GM18951 (cell line): ENCODE measurements at regions of chr18 and their contacts with region 1.

Region 1: DNA sequence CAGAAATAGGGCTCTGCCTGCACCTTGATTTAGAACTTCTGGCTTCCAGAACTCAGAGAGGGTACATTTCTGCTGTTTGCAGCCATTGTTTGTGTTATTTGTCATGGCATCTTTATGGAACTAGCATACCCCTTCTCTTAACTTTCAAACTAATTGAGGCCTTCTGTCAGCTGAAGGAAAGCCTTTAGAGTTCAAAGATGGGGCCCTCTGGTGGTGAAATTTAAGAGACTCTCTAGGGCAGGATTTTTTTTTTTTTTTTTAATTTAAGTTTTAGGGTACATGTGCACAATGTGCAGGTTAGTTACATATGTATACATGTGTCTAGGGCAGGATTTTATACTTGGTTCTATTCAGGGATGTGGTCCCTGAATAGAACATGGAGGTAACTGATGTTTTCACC is 260.6 kb upstream of the LINC00305 start:
- POLR2A ChIP-seq: no peak

Region 2: GRCh38 chr18:64037812-64038414 is 371.6 kb before region 1 on chr18:
- in situ Hi-C with region 1: loop called (anchors 25 kb)
- POLR2A ChIP-seq: no peak

Region 3: DNA sequence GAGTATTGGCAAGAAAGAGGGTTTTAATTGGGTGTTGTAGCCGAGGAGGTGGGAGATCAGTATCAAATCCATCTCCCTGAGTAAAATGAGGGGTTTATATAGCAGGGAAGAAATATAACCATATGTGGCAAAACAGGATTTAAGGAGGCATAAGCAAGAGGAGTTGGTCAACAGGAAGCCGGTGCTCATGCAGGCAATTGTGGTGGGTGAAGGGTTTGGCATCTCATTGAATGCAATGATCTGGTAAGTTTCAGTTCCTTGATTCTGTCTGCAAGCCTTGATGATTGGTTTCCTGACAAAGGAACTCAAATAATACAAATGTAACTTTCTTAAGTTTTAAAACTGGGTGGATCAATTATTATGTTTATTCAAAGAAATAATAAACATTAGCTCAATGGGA is 303.8 kb after region 1 on chr18:
- in situ Hi-C with region 1: no loop called
- POLR2A ChIP-seq: no peak